H1 (cell line): ENCODE measurements at regions of chr5 and their contacts with region 1.

Region 1: DNA sequence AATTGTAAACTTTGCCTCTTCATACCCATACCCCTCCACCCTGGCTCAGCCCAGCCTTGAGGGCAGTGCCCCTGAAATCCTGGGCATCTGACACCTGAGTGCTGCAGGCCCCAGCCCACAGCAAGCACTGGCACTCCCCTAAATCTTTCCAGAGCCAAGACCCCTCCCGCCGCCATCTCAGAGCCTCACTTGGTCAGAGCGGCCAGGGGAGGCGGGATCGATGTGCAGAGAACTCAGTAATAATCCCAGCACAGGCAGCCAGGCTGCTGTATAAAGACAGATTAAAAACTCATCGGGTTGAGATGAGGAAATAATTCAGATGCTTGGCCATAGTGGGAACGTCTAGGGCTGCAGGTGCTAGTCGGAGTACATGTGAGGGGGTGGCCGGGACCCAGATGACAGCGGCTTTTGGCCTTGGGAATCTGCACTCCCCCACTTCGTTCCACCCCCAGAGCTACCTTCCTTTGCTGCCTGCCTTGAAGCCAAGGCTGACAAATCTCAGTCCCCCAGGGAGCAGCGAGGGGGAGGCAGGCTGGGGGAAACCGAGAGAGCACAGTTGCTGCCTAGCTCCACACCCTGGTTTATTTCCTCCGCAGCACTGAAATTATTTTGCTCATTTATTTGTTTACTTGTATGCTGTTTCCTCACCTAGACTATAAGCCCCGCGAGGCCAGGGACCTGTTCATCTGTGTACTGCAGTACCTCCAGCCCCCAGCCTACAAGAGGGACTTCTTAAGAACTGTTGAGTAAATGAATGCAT is 19.5 kb upstream of the ARAP3 start:
- DNase-seq: no peak
- H3K4me3 ChIP-seq: peak overlapping the region in 1 of 4 experiments; percentile 73; a peak in 1 of 8 replicates
- H3K27ac ChIP-seq: no peak overlapping the region
- H3K4me1 ChIP-seq: peaks cover 5 to 9% (median 5%) of the 10 kb centered on the region in 4 experiments
- H3K27me3 ChIP-seq: peaks cover 0 to 36% (median 30%) of the 10 kb centered on the region in 4 experiments; a peak in 6 of 7 replicates
- CTCF ChIP-seq: no peak
- EP300 ChIP-seq: no peak
- POLR2A ChIP-seq: no peak
- RAD21 ChIP-seq: no peak

Region 2: DNA sequence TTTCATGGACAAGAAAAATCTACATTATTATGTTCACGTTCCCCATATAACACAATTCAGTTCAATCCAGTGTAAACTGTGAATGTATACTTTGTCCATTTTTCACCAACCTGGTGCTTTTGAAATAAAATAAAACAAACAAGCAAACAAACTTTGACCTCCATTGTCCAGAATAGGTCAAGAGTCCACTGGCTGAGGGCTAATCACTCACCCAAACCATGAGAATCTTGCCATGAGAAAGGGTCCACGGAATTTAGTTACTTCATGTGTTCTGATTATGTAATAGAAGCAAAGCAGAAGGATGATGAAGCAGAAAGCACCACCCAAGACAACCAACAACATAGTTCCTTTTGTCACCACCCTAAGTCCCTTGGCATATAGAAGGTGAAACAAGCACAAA is 111.4 kb before region 1 on chr5:
- CTCF ChIA-PET with region 1: no interaction called
- POLR2A ChIA-PET with region 1: no interaction called
- DNase-seq: no peak
- H3K4me3 ChIP-seq: no peak overlapping the region
- H3K27ac ChIP-seq: no peak overlapping the region
- H3K4me1 ChIP-seq: no peaks in the 10 kb centered on the region
- H3K27me3 ChIP-seq: no peaks in the 10 kb centered on the region
- CTCF ChIP-seq: no peak
- EP300 ChIP-seq: no peak
- POLR2A ChIP-seq: no peak
- RAD21 ChIP-seq: no peak

Region 3: GRCh38 chr5:141664732-141665461 is 36.6 kb before region 1 on chr5:
- CTCF ChIA-PET with region 1: interaction called, 137 read pairs
- POLR2A ChIA-PET with region 1: no interaction called
- DNase-seq: peak; percentile 66 to 94
- H3K4me3 ChIP-seq: no peak overlapping the region
- H3K27ac ChIP-seq: no peak overlapping the region
- H3K4me1 ChIP-seq: no peaks in the 10 kb centered on the region
- H3K27me3 ChIP-seq: no peaks in the 10 kb centered on the region
- CTCF ChIP-seq: peak; percentile 91 to 96 (median 91)
- EP300 ChIP-seq: no peak
- POLR2A ChIP-seq: no peak
- RAD21 ChIP-seq: peak; percentile 90 to 95

Region 4: GRCh38 chr5:141713616-141714309 is 12.2 kb after region 1 on chr5:
- CTCF ChIA-PET with region 1: interaction called, 95 read pairs
- POLR2A ChIA-PET with region 1: interaction called, 5 read pairs
- DNase-seq: no peak
- H3K4me3 ChIP-seq: no peak overlapping the region
- H3K27ac ChIP-seq: no peak overlapping the region
- H3K4me1 ChIP-seq: peaks cover 3 to 20% (median 11%) of the 10 kb centered on the region in 4 experiments
- H3K27me3 ChIP-seq: no peaks in the 10 kb centered on the region
- CTCF ChIP-seq: no peak
- EP300 ChIP-seq: no peak
- POLR2A ChIP-seq: no peak
- RAD21 ChIP-seq: no peak

Region 5: DNA sequence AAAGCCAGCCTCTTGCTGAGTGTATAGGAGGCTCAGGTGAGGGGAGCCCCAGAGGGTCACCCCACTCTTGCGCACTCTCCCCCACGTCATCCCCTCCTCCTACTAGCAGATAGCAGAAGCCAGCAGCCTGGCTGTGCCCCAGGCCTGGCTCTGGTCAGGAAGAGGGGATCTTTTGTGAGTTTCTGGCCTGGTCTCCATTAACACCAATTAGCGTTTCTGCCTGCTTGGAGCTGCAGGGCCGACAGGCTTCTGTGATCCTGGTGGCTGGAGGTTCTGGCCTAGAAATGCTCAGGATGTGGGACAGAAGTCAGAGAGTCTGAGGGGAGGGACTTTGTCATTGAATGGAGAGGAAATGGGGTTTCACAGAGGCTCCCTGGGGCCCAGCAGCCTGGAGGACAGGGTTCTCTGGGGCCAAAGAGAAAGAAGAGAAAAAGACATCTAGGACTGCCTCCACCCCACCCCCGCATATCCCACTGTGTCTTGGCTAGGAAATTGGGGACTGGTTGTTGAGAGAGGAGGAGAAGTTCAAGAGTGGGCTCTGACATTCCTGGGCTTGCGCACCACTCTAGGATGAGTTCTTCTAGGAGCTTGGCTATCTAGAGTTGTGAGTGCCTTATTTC is 28.0 kb after region 1 on chr5:
- CTCF ChIA-PET with region 1: interaction called, 38 read pairs
- POLR2A ChIA-PET with region 1: interaction called, 4 read pairs
- DNase-seq: no peak
- H3K4me3 ChIP-seq: no peak overlapping the region
- H3K27ac ChIP-seq: no peak overlapping the region
- H3K4me1 ChIP-seq: peaks cover 1 to 11% (median 8%) of the 10 kb centered on the region in 4 experiments; a peak in 3 of 7 replicates
- H3K27me3 ChIP-seq: no peaks in the 10 kb centered on the region
- CTCF ChIP-seq: no peak
- EP300 ChIP-seq: no peak
- POLR2A ChIP-seq: no peak
- RAD21 ChIP-seq: no peak

Region 6: DNA sequence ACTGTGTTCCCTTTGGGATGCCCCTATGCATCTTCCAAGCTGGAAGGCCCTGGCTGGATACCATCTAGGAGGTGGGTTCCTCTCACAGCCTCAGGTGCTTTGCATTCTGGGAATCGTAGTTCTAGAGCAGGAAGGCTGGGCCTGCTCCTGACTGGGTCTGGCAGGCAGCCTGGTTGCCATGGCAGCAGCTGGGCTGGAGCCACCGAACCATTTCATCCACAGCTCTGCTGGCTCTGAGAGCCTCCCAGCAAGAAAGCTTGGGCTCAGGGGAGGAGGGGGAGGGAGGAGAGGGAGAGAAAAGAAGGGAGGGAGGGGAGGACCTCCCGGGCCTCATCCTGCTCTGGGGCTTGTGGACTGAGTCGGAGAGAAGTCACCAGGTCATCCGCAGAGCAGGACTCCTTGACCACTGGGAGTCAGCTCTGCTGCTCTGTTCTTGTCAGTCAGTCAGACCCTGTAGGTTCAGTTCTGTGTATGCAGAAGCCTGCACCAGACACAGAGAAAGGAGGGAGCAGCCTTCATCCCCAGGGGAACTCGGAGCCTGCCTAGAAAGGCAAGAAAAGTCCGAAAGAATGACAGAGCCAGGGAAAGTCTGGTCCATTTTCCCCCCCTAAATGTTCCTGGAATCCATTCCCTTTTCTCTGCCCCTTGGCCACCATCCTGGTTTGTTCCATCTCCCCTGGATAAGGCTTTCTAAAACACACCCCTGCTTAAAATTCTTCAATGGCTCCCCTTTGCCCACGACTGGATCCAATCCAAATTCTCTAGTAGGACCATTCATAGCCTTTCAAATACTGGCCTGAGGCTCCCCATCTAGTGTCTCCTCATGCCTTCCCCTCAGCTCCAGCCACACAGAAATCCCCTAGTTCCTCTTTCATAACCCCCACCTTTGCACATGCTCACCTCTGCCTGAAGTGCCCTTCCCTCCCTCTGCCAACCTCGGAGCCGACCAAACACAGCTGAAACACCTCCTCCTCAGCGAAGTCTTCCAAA is 45.9 kb after region 1 on chr5:
- CTCF ChIA-PET with region 1: interaction called, 98 read pairs
- POLR2A ChIA-PET with region 1: no interaction called
- DNase-seq: peak; percentile 50 to 80
- H3K4me3 ChIP-seq: no peak overlapping the region; a peak in 1 of 8 replicates
- H3K27ac ChIP-seq: no peak overlapping the region
- H3K4me1 ChIP-seq: peaks cover 0 to 9% (median 5%) of the 10 kb centered on the region in 4 experiments; a peak in 5 of 7 replicates
- H3K27me3 ChIP-seq: peaks cover 4 to 10% (median 4%) of the 10 kb centered on the region in 4 experiments
- CTCF ChIP-seq: no peak
- EP300 ChIP-seq: no peak
- POLR2A ChIP-seq: no peak
- RAD21 ChIP-seq: no peak

Region 7: GRCh38 chr5:141940695-141941271 is 239.2 kb after region 1 on chr5:
- CTCF ChIA-PET with region 1: interaction called, 16 read pairs
- POLR2A ChIA-PET with region 1: no interaction called
- DNase-seq: no peak
- H3K4me3 ChIP-seq: no peak overlapping the region
- H3K27ac ChIP-seq: no peak overlapping the region
- H3K4me1 ChIP-seq: peaks cover 0 to 9% (median 7%) of the 10 kb centered on the region in 4 experiments; a peak in 5 of 7 replicates
- H3K27me3 ChIP-seq: no peaks in the 10 kb centered on the region; a peak in 1 of 7 replicates
- CTCF ChIP-seq: no peak
- EP300 ChIP-seq: no peak
- POLR2A ChIP-seq: no peak
- RAD21 ChIP-seq: no peak